ENCODE measurements at regions of chr6 and their contacts with region 1.

Region 1: DNA sequence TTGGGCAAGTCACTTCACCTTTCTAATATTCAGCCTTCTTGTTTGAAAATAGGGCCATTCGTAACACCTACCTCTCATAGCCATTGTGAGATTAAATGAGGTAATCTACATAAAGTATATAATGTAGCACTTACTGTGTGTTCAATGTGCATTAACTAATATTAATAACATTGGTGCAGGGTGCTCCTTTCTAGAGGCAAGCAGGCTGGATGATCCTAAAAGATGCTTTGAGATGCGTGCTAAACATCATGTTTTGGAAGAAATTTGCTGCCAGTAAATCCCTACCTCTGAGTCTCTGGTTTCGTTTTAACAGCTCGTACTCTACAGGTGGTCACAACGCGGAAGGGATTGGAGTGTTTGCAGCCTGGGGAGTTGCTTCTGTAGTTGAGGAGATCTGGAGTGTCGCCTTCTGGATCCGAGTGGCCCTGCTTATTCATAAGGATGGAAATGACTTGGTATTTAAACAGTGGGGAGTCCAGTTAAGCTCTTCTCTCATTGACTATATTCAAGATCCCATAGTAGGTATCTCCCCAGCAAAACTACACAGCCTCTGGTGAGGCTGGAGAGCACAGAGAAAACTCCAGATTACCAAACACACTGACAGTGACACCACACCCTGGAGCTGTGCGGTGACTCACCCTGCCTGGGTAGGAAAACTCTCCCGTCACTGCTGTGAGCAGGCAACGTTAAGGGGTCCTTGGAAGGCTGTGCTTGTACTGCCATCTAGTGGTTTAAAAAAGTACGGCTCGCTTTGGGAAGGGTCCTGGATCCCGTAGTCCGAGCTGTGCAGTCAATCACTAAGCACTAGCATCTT is 107.9 kb downstream of the MAP3K7 start:
- DNase-seq: peak; percentile 59 to 94 (median 86)
- H3K4me3 ChIP-seq: peak overlapping the region in 34 of 59 donors; percentile 2 to 46 (median 23)
- H3K27ac ChIP-seq: peak overlapping the region in 35 of 59 donors; percentile 2 to 79 (median 48)
- H3K27me3 ChIP-seq: no peaks in the 10 kb centered on the region
- CTCF ChIP-seq: peak; percentile 78 to 99 (median 95)

Region 2: DNA sequence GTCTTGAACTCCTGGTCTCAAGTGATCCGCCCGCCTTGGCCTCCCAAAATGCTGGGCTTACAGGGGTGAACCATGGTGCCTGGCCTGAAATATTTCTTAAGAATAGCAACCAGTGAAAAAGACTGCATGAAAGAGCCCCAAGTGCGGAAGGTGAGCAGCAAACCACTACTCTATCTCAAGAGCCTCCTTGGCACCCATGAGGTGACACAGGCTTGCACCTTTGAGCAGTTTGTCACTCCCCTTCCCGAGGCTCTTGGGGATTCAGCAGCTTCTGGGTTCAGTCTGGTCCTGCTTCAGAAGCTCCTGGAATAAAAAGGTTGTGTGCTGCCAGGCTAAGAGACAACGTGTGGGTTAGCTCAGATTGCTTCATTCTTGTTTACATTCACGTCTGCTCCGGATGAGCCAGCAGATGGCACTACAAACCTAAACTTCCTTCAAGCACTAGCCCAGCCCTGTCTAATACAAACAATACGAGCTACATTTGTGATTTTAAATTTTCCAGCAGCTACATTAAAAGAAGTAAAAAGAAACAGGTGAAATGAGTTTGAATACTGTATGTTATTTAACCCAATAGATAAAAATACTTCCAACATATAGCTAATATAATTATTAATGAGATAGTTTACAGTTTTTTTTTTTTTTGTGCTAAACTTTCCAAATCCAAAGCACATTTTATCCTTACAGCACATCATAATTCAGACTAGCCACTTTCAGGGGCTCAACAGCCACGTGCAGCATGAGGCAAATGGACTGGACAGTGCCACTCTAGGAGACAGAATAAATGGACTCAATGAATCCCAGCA is 538.6 kb before region 1 on chr6:
- intact Hi-C with region 1: loop called (anchors 1 to 2 kb)
- DNase-seq: peak; percentile 44 to 92 (median 80)
- H3K4me3 ChIP-seq: peak overlapping the region in 27 of 59 donors; percentile 2 to 47 (median 30)
- H3K27ac ChIP-seq: peak overlapping the region in 58 of 59 donors; percentile 22 to 92 (median 84)
- H3K27me3 ChIP-seq: no peaks in the 10 kb centered on the region
- CTCF ChIP-seq: peak; percentile 23 to 92 (median 81)

Region 3: DNA sequence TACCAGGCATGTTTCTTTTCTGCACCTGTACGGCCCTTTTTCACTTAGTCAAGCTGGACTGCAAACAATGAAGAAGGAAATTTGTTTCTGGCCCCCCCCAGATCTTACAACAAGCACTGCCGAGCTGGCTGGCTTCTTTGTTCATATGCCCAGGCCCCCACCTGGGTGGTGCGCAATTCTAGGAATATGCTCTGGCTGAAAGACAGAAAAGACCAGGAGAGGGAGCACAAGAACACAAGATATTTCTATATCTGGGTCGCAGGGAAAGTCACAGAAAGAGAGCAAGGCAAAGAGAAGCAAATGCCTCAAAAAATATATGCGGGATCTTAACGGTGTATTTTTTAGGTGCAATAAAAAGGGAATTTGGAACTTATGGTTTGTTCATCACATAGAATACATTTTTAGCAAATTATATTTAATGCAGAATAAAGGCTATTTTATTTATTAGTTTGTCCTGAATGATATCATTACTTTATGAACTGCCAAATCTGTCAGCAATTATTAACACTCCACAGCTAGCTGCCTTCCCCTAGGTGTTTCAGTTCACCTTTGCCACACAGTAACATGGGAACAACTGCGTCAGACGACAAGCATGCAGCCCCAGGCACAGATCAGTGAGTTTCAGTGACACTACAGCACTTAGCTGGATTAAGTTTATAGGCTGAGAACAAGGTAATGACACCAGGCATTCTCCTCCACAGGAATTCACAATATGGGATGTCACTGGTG is 508.2 kb before region 1 on chr6:
- intact Hi-C with region 1: loop called (anchors 1 to 5 kb)
- DNase-seq: peak in 7 of 10 donors; percentile 53 to 81 (median 57)
- H3K4me3 ChIP-seq: peak overlapping the region in 3 of 59 donors; percentile 1 to 20 (median 2)
- H3K27ac ChIP-seq: peak overlapping the region in 12 of 59 donors; percentile 10 to 65 (median 19)
- H3K27me3 ChIP-seq: no peaks in the 10 kb centered on the region
- CTCF ChIP-seq: peak; percentile 21 to 83 (median 70)

Region 4: DNA sequence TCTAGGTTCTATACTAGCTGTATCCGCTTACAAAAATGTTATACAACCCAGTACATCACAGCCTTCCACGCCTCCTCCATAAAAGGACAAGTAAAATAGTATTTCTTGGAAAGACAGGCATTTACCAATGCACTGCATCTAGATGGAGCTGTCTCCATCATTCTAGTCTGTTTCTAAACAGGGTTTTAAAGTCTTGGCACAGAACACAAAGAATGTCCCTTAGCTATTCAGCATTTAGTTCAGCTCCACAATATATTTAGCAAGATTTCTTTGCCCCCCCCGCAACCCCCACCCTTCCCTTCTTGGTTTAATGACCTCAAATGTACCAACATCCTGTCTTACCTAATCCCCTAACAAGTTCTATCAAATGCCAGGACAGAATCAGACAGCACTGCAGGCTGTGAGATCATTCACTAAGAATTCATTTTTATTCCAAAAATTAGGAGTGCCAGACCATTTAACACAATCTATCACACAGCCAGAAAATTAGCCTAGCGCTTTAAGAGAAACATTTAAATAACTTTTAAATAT is 380.9 kb before region 1 on chr6:
- intact Hi-C with region 1: loop called in 1 of 2 experiments (anchors 10 kb)
- DNase-seq: peak in 1 of 10 donors; percentile 24
- H3K4me3 ChIP-seq: peak overlapping the region in 7 of 59 donors; percentile 1 to 32 (median 18)
- H3K27ac ChIP-seq: peak overlapping the region in 24 of 59 donors; percentile 1 to 70 (median 30)
- H3K27me3 ChIP-seq: no peaks in the 10 kb centered on the region
- CTCF ChIP-seq: peak in 55 of 56 donors; percentile 23 to 74 (median 56)

Region 5: DNA sequence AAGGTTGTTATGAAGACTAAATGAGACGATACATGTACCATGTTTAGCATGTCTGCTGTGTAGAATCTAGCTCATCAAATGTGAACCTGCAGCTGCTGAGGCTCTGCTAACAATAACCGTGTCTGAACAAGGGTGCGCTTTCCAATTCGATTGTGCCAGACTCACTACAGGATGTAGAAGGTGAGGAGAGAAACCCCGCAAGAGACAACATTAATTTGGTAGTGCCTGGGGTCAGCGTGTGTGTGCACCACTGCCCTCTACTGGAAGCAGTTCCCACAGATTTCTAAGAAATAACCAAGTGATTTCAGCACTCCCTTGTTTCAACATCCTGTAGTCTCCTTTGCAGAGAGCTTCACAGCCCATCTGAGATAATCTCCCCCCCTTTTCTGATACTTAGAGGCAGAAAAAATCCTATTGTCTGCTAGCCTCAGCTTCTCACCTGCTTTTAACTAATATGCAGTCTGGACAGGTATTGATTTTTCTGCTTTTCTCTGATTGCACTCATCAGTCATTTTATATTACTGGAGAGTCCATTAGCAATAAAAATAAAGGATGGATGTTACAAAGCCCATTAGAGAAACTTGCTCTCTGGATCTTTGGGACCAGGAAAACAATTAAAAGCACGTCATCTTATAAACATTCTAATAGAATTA is 85.6 kb before region 1 on chr6:
- intact Hi-C with region 1: loop called (anchors 5 kb)
- DNase-seq: peak in 6 of 10 donors; percentile 32 to 62 (median 54)
- H3K4me3 ChIP-seq: peak overlapping the region in 1 of 59 donors; percentile 20
- H3K27ac ChIP-seq: no peak overlapping the region
- H3K27me3 ChIP-seq: no peaks in the 10 kb centered on the region
- CTCF ChIP-seq: peak; percentile 62 to 88 (median 79)

Region 6: GRCh38 chr6:90586836-90587638 is 108.0 kb after region 1 on chr6 and contains the start of gene MAP3K7:
- intact Hi-C with region 1: loop called in 1 of 2 experiments (anchors 10 kb)
- DNase-seq: peak; percentile 86 to 97 (median 94)
- H3K4me3 ChIP-seq: peak within 1 kb of the TSS; percentile 72 to 100 (median 99)
- H3K27ac ChIP-seq: peak within 1 kb of the TSS; percentile 81 to 99 (median 98)
- H3K27me3 ChIP-seq: no peaks in the 10 kb centered on the region
- CTCF ChIP-seq: peak in 8 of 56 donors; percentile 5 to 28 (median 18)
- total RNA-seq, gene MAP3K7: 23.8 to 46.7 (median 36.9) TPM